MCF 10A (cell line): ENCODE measurements at regions of chrX and their contacts with region 1.

Region 1: GRCh38 chrX:16436348-16437188 is 213.4 kb upstream of the S100G start:
- DNase-seq: peak; percentile 91
- H3K4me3 Mint-ChIP-seq: no peak overlapping the region
- H3K27ac Mint-ChIP-seq: no peak overlapping the region
- H3K4me1 Mint-ChIP-seq: no peaks in the 10 kb centered on the region
- H3K27me3 Mint-ChIP-seq: peaks cover 22% of the 10 kb centered on the region
- CTCF ChIP-seq: peak; percentile 69

Region 2: GRCh38 chrX:16643176-16643575 is 206.6 kb after region 1 on chrX:
- CTCF ChIA-PET with region 1: interaction called, 10 read pairs
- POLR2A ChIA-PET with region 1: interaction called, 3 read pairs
- intact Hi-C with region 1: no loop called
- DNase-seq: peak; percentile 55
- H3K4me3 Mint-ChIP-seq: no peak overlapping the region
- H3K27ac Mint-ChIP-seq: no peak overlapping the region
- H3K4me1 Mint-ChIP-seq: peaks cover 6% of the 10 kb centered on the region
- H3K27me3 Mint-ChIP-seq: peaks cover 69% of the 10 kb centered on the region
- CTCF ChIP-seq: no peak

Region 3: DNA sequence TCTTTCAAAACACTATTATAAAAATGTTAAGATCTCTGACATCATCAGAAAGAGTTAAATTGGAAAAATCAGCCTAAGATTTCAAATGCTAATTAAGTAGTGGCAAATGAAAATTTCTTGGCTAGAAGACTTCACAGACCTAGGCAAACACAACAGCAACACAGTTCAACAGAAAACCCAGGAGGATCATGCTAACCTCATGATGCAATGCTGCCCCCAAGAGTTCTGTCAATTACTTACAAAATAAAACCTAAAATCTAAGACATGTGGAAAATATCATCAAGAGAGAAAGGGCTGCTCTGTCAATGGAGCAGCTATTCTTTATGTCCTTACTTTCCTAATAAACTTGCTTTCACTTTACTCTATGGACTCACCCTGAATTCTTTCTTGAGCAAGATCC is 234.4 kb after region 1 on chrX:
- CTCF ChIA-PET with region 1: interaction called, 37 read pairs
- POLR2A ChIA-PET with region 1: no interaction called
- intact Hi-C with region 1: loop called (anchors 1 kb)
- DNase-seq: peak; percentile 57
- H3K4me3 Mint-ChIP-seq: no peak overlapping the region
- H3K27ac Mint-ChIP-seq: no peak overlapping the region
- H3K4me1 Mint-ChIP-seq: no peaks in the 10 kb centered on the region
- H3K27me3 Mint-ChIP-seq: peaks cover 23% of the 10 kb centered on the region
- CTCF ChIP-seq: peak; percentile 45

Region 4: DNA sequence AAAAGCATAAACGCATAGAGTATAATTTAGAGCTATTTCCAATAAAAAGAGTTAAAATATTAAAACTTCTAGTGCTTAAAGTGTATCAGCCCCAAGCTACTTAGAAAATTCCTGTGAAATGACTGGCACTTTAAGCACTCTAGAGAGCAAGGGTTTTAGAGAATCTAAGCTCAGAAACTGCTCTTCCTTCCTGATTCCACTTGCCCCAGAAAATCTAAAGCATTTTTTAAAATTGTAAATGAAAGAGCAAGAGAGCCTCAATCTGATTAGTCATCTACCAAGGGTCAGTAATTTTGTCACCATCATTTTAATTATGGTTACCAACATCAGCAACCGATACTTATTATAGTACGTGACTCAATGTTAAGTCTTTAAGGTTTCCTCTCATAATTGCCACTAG is 250.9 kb after region 1 on chrX:
- CTCF ChIA-PET with region 1: interaction called, 10 read pairs
- POLR2A ChIA-PET with region 1: interaction called, 3 read pairs
- intact Hi-C with region 1: no loop called
- DNase-seq: no peak
- H3K4me3 Mint-ChIP-seq: no peak overlapping the region
- H3K27ac Mint-ChIP-seq: no peak overlapping the region
- H3K4me1 Mint-ChIP-seq: no peaks in the 10 kb centered on the region
- H3K27me3 Mint-ChIP-seq: peaks cover 32% of the 10 kb centered on the region
- CTCF ChIP-seq: no peak